ENCODE measurements at regions of chr13 and their contacts with region 1.

Region 1: DNA sequence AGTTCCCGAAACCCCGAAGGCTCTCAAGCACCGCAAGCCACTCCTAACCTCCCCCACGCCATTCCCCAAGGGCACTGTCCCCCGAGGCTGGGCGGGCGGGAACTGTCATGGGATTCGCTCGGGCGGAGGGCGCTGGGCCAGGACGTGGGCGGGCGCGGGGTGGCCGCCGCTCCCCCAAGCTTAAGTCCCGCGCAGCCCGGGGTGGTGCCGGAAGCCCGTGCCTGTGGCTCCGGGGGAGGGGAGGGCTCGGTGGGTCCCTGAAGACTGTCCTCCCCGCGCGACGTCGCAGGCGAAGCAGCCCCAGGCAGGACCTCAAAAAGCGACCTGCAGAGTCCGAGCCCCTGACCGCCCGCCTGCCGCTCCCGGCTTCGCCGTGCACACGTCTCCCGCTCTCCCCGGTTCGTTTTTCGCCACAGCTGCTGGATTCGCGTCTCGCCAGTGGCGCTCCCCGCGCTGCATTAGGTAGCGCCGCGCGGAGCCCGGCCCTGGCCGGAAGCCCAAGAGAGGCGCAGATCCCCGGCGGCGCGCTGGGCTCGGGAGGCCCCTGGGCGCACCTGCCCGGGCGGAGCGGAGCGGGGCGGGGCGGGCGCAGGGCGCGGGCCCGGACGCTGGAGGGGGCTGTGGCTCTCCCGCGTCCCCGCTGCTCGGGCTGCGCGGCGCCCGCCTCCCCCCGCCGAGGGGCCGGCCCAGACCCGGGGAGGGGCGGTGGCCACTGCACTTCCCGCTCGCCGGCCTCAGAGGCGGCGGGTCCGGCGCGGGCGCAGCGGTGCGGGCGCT is at the start of gene FARP1:
- DNase-seq: peak; percentile 27
- ATAC-seq: peak; percentile 89
- H3K4me3 ChIP-seq: peak within 1 kb of the TSS; percentile 51 to 72
- H3K27ac ChIP-seq: peak within 1 kb of the TSS; percentile 64; the same call in 1 of the 2 replicates
- H3K4me1 ChIP-seq: peaks cover 34 to 45% of the 10 kb centered on the region in 2 experiments
- H3K27me3 ChIP-seq: no peaks in the 10 kb centered on the region
- CTCF ChIP-seq: no peak; a peak in 1 of 6 replicates
- POLR2A ChIP-seq: no peak
- RAD21 ChIP-seq: peak; percentile 34
- total RNA-seq, gene FARP1: 30.5 TPM

Region 2: DNA sequence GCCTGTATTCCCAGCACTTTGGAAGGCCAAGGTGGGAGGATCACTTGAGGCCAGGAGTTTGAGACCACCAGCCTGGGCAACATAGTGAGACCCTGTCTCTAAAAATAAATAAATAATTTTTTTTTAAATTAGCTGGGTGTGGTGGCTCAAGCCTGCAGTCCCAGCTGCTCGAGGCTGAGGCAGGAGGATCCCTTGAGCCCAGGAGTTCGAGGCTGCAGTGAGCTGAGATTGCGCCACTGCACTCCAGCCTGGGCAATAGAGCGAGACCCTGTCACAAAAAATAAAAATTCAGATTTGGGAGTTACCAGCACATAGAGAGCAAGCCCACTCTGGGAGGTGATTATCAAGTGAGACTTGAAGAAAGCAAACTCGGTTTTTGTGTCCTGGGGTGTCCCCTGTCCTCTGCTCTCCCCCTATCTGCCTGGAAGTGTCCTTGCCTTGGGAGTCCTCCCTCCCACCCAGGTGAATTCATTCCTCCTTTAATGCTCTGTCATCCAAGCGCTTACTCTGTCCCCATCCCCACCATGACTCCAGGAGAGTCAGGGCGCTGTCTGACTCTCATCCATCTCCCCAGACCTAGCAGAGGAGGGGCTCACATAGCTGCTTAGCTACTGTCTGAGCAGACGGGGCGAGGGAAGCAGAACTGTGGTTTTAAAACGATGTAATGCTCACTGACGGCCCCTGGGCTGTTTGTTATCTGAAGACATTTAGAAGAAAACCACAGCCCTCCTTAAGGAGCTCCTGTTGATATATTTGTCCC is 287.6 kb after region 1 on chr13:
- CTCF ChIA-PET with region 1: no interaction called
- POLR2A ChIA-PET with region 1: no interaction called
- RAD21 ChIA-PET with region 1: interaction called in 1 of 2 experiments, 5 read pairs
- intact Hi-C with region 1: loop called (anchors 2 kb)
- DNase-seq: no peak
- ATAC-seq: no peak
- H3K4me3 ChIP-seq: no peak overlapping the region
- H3K27ac ChIP-seq: no peak overlapping the region
- H3K4me1 ChIP-seq: peaks cover 0 to 4% of the 10 kb centered on the region in 2 experiments; a peak in 1 of 4 replicates
- H3K27me3 ChIP-seq: no peaks in the 10 kb centered on the region
- CTCF ChIP-seq: no peak
- POLR2A ChIP-seq: no peak
- RAD21 ChIP-seq: no peak